ENCODE measurements at regions of chr6 and their contacts with region 1.

Region 1: DNA sequence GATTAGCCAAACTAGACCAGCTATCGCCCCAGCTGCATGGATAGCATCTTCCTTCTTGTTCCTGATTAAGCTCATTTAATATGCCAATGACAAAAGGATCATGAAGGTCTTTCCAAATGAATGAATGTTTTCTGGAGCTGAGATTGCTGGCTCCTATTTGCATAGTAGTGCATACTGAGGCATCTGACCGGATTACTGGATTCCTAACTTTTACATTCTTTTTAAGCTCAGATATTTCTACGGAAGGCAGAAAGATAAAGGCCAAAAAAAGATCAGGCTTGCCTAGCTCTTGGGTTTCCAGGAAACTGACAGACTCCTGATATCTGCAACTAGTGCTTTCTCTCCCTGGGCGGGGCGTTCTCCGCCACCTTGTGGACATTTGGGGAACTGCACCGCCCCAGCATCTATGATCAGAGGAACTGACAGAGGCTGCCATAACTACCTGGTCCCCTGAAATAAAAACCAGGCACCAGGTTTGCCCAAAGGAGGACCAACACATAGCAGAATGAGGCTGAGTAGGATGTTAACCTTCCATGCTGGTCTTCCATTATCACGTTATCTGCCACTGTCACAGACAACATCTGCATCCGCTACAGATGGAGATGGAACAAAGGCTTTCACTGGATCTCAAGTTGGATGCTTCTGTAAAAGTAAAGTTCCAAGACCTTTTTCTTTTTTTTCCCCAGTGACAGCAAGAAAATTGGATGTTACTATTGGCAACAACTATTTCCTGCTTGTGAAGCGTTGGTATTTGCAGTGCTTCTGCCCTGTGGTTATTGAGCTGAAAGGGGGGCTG is 33.2 kb downstream of the NT5E start:
- DNase-seq: peak; percentile 72 to 92 (median 90)
- ATAC-seq: peak; percentile 98
- H3K4me3 ChIP-seq: no peak overlapping the region
- H3K4me1 ChIP-seq: no peaks in the 10 kb centered on the region
- CTCF ChIP-seq: peak; percentile 99

Region 2: GRCh38 chr6:85354761-85355618 is 128.1 kb before region 1 on chr6:
- intact Hi-C with region 1: loop called (anchors 2 to 5 kb)
- DNase-seq: peak; percentile 73 to 90 (median 87)
- ATAC-seq: peak; percentile 99
- H3K4me3 ChIP-seq: no peak overlapping the region
- H3K4me1 ChIP-seq: no peaks in the 10 kb centered on the region
- CTCF ChIP-seq: peak; percentile 94

Region 3: DNA sequence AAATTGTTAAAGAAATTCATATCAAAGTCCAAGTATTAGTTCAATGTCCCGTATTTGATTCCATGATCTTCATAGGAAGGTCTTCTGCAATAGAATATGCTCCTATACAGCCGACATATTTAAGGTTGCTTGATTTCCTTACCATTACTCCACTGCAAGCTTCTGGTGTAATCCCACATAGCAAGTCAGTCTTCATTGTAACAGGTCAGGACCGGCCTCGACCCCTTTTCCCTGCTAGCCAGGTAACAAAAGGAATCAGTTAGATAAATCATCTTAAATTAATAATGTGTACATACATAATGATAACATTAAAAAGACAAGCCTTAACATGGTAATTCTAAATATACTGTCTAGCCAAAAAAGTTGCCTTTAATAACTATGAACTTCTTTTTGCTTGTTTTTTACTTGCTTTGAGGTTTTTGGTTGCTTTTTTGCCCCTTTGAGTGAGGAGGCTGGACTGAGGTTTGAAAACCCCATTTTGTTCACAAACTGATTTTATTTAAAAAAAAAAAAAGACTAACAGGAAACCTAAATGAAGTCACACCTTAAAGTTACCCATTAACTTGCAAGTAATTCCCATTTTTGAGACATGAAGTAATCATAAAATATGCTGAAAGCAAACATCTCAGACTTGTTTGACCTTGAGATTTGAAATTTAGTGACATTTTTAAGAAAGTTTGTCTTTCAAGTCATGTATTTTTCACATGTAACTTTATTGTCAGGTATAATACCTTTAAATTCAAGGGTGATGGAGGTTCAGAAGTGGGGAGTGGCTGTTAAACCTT is 129.8 kb after region 1 on chr6:
- intact Hi-C with region 1: no loop called
- DNase-seq: no peak
- ATAC-seq: no peak
- H3K4me3 ChIP-seq: no peak overlapping the region
- H3K4me1 ChIP-seq: no peaks in the 10 kb centered on the region
- CTCF ChIP-seq: no peak

Measured in mucosa of descending colon (tissue), 3 donors.